ENCODE measurements at regions of chr1 and their contacts with region 1.

Region 1: DNA sequence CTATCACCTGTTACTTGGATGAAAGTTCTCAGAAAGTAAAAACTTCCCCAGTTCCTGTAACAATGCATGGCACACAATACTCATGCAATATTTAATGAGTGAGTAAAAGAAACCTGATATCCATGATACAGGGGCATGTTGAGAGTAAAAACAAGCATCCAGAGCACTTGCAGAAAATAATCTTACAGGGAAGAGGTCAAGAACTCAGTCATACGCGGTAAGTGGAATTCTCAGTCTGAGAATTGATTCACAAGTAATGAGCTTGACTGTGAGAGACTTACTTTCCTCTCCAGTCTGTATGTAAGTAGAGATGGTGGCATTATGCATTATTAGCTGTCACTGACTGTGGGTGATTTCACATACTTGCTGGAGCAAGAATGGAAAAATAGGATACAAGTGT is 976.9 kb downstream of the BRINP3 start:
- DNase-seq: peak; percentile 55
- ATAC-seq: peak; percentile 24; the same call in 1 of the 2 replicates
- H3K4me3 ChIP-seq: no peak overlapping the region
- H3K27ac ChIP-seq: no peak overlapping the region
- H3K4me1 ChIP-seq: no peaks in the 10 kb centered on the region
- H3K27me3 ChIP-seq: no peaks in the 10 kb centered on the region
- CTCF ChIP-seq: no peak
- POLR2A ChIP-seq: no peak
- RAD21 ChIP-seq: no peak

Region 2: DNA sequence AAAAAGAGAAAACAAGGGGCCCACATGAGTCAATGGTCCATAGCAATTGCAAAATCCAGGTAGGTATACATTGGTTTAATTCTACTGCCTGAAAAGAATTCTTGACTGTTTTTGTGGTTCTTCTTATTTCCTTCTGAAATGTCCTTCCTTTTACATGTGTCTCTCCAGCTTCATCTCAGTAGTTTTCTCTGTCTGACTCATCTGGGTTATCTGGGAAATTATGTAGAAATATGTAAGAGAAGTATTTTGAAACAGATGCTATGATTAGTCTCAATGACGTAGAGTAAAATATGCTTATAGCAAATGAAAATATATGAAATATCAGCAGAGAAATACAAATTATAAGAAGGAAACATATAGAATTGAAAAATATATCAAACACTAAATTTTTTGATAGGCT is 23.7 kb after region 1 on chr1:
- CTCF ChIA-PET with region 1: no interaction called
- POLR2A ChIA-PET with region 1: no interaction called
- dilution Hi-C with region 1: no loop called
- in situ Hi-C with region 1: no loop called
- intact Hi-C with region 1: no loop called
- DNase-seq: peak; percentile 56
- ATAC-seq: no peak
- H3K4me3 ChIP-seq: no peak overlapping the region
- H3K27ac ChIP-seq: no peak overlapping the region
- H3K4me1 ChIP-seq: no peaks in the 10 kb centered on the region
- H3K27me3 ChIP-seq: no peaks in the 10 kb centered on the region
- CTCF ChIP-seq: no peak
- POLR2A ChIP-seq: no peak
- RAD21 ChIP-seq: no peak

Region 3: GRCh38 chr1:189619682-189620332 is 119.0 kb after region 1 on chr1:
- CTCF ChIA-PET with region 1: no interaction called
- POLR2A ChIA-PET with region 1: no interaction called
- dilution Hi-C with region 1: no loop called
- in situ Hi-C with region 1: no loop called
- intact Hi-C with region 1: no loop called
- DNase-seq: peak; percentile 93
- ATAC-seq: peak; percentile 49; the same call in 1 of the 2 replicates
- H3K4me3 ChIP-seq: no peak overlapping the region
- H3K27ac ChIP-seq: no peak overlapping the region
- H3K4me1 ChIP-seq: no peaks in the 10 kb centered on the region
- H3K27me3 ChIP-seq: no peaks in the 10 kb centered on the region
- CTCF ChIP-seq: no peak
- POLR2A ChIP-seq: no peak
- RAD21 ChIP-seq: no peak

Region 4: GRCh38 chr1:189834813-189835212 is 334.0 kb after region 1 on chr1:
- CTCF ChIA-PET with region 1: no interaction called
- POLR2A ChIA-PET with region 1: no interaction called
- dilution Hi-C with region 1: no loop called
- in situ Hi-C with region 1: no loop called
- intact Hi-C with region 1: loop called (anchors 10 kb)
- DNase-seq: no peak
- ATAC-seq: no peak
- H3K4me3 ChIP-seq: no peak overlapping the region
- H3K27ac ChIP-seq: no peak overlapping the region
- H3K4me1 ChIP-seq: no peaks in the 10 kb centered on the region
- H3K27me3 ChIP-seq: no peaks in the 10 kb centered on the region
- CTCF ChIP-seq: no peak
- POLR2A ChIP-seq: no peak
- RAD21 ChIP-seq: no peak

Measured in IMR-90 (cell line).